ENCODE measurements at regions of chr12 and their contacts with region 1.

Region 1: DNA sequence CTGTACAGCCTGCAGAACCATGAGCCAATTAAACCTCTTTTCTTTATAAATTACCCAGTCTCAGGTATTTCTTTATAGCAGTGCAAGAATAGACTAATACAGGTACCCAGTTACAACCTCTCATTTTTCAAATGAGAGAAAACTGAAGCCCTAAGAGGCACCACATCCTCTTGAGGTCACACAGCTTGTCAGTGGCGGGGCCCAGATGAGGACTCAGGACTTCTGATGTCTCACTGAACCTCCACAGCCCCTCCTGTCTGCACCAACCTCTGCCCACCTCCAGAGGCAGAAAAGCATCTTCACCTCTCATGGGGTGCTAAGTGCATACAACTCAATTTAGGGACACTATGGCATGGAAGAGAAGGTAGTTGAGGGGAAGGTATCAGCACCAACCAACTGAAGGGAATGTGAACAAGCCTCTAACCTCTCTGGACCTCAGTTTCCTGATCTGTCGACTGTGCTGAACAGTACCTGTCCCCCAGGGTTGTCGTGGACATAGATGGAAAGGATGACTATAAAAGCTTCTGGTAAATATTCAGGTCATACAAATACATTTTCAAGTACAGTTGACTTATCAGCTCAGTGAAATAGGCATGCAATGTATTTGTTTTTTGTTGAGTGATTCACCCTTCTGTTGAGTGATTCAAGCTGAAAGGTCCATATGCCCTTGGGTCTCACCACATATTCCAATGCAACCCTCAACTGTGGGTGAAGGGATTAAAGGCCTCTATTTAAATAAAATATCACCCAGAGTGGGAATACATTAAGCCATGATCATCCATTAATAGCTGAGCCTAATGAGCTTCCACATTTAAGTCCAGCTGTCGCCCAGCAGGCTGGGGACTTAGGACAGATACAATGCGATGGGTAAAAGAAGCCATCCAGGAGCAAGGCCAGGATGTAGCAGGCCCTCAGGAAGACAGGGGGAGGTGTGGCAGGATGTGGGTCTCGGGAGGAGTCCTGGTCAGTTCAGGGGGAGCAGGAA is 120.4 kb downstream of the CRACR2A start:
- DNase-seq: peak; percentile 40
- H3K4me3 Mint-ChIP-seq: no peak overlapping the region
- H3K27ac Mint-ChIP-seq: peak overlapping the region; percentile 61
- H3K4me1 Mint-ChIP-seq: peaks cover 17% of the 10 kb centered on the region
- H3K27me3 Mint-ChIP-seq: no peaks in the 10 kb centered on the region

Region 2: DNA sequence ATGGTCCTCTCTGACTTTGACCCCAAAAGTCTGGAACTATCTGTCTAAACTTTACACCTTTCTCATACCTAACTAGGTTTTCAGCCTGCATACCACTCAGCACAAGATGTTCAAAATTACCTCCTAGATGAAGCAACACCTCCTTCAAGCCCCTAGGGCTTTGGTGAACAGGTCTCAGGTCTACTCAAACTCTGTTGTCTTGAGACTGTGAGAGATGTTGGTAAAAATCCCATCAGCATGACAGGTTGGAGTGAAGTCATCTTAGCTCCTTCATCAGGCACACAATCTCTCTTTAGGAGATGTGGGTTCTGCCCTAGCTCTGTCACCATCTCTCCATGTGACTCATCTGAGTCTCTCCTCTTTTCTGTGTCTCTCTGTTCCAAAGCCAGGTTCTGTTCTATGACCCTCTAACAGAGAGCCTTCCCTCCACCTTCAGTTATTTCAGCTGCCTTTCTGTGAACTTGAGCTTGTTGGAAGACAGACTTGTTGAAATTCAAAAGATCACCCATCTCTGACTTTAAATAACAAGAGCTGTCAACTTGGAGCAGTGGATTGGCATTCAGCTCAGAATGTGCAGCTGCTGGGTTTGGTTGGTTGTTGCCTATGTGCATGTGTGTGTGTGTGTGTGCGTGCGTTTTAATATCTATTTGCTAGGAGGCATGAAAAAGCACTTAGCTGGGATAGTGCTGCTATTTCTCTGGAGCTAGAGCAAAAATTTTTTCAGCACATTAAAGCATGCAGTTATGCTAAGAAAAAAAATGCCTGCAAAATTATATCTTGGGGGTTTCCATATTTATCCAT is 10.3 kb before region 1 on chr12:
- CTCF ChIA-PET with region 1: interaction called, 10 read pairs
- POLR2A ChIA-PET with region 1: no interaction called
- DNase-seq: no peak
- H3K4me3 Mint-ChIP-seq: no peak overlapping the region
- H3K27ac Mint-ChIP-seq: no peak overlapping the region
- H3K4me1 Mint-ChIP-seq: peaks cover 7% of the 10 kb centered on the region
- H3K27me3 Mint-ChIP-seq: no peaks in the 10 kb centered on the region